ENCODE measurements at regions of chr6 and their contacts with region 1.

Region 1: DNA sequence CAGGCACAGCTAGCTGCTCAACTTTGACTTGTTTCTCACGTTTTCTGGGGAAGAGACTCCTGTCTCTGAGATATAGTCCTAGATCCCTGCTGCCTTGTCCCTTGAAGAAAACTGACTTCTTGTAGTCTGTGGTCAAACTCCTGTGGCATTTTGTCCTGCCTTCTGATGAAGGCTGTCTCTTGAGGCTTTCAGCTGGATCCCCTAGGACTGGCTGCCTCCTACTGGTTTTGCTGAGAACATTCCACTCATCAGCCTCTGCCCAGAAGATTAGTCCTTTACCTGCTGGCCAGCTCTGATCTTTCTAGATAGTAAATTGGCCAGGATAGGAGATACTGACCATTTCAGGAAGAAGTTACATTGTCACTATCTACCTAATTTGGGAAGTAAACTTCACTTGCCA is 71.9 kb upstream of the CNR1 start:
- DNase-seq: no peak
- ATAC-seq: no peak

Region 2: DNA sequence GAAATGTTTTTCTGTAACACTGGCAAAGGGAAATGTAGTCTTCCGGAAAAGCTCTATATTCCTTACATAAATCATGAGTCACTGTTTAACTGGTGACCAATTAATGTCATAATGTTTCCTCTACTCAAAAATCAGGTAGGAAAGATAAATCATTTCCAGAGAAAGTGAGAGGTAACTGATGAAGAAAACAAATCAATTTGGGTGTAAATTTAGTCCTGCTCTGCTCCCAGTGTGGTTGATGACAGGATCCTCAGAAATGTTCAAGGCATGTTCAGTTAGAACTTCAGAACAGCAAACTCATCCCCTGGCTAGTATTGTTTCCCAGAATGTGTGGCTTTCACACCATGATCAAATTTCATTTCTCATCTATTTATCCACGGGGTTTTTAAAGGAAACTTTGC is 229.2 kb before region 1 on chr6:
- intact Hi-C with region 1: no loop called
- DNase-seq: no peak
- ATAC-seq: no peak

Region 3: GRCh38 chr6:88276331-88276730 is 38.3 kb after region 1 on chr6:
- intact Hi-C with region 1: loop called (anchors 2 kb)
- DNase-seq: no peak
- ATAC-seq: no peak